Astrocyte of the cerebellum (primary cell): ENCODE measurements at regions of chr10 and their contacts with region 1.

Region 1: DNA sequence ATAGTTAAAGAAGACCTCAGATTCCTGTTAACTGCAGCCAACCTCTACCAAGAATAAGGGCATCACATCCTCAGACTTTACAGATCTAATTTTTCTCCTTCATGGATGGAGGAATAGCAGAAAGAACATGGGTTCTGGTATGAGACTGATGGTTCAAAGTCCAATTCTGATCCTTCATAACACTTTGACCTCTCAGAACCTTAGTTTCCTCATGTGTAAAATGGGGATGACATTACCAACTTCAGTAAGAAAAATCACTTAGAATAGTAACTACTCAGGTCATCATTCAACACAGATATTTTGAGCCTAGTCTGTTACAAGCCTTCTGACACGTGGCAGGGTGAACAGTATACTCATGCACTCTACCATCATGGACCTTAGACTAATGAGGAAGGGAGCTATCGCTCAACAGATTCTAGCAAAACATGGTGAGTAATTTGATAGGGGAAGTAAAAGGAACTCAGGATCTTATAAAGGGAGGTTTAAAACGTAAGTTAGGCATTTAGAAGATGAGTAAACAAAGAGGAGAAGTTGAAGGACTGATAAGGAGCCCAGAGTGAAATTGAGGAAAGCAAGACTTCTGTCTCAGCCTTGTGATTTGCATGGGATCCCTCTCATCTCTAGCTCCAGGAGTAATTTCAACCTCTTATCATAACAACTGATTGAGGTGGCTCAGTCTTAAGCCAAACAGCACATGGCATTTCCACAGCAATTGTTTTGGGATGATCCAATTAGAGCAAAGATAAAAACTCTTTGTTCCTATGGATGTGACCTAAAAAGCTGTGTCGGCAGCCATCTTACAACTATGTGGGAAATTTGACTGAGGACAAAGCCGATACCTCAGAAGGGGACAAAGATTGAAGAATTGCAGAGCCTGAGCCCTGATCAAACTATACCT is 69.2 kb upstream of the TCF7L2 start:
- DNase-seq: no peak
- H3K4me3 ChIP-seq: no peak overlapping the region
- CTCF ChIP-seq: no peak

Region 2: GRCh38 chr10:112775381-112775780 is 105.5 kb before region 1 on chr10:
- in situ Hi-C with region 1: loop called (anchors 5 kb)
- DNase-seq: no peak
- H3K4me3 ChIP-seq: no peak overlapping the region
- CTCF ChIP-seq: peak; percentile 35

Region 3: GRCh38 chr10:113073549-113074189 is 192.8 kb after region 1 on chr10:
- in situ Hi-C with region 1: no loop called
- DNase-seq: peak; percentile 94
- H3K4me3 ChIP-seq: no peak overlapping the region
- CTCF ChIP-seq: no peak